ENCODE measurements at regions of chr2 and their contacts with region 1.

Region 1: GRCh38 chr2:168773719-168774521 is 28.5 kb upstream of the NOSTRIN start:
- DNase-seq: no peak
- H3K4me3 ChIP-seq: no peak overlapping the region
- H3K27ac ChIP-seq: no peak overlapping the region
- H3K4me1 ChIP-seq: peaks cover 0 to 4% (median 0%) of the 10 kb centered on the region in 4 donors
- H3K27me3 ChIP-seq: no peaks in the 10 kb centered on the region
- CTCF ChIP-seq: peak; percentile 44 to 60 (median 47)
- EP300 ChIP-seq: no peak
- POLR2A ChIP-seq: no peak

Region 2: DNA sequence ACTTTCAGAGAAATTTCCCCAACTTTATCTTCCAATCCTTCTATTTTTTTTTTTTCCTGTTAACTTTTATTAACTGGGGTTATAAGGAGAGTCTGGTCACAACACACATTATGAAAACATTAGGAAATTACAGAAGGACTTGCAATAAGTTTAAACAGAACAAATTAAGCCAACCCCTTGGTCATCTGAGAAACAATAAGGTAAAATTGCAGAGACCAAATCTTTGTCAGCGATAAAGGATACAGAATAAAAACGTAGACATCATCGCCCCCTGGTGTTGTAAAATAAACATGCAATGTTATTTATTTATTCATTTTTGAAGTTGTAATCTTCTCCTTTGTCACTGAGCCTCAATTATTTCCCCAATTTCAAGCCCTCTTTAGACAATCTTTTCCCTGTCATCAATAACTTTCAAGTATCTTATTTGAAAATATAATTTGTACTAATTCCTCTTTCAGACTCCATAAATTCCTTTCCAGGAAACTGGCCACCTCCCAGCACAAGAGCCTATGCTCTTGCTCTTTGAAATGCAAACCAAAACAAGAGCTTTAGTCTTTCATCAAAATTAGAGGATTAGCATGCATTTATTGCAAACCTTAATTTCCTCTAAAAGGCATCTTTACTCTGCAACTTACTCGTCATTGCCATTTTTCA is 146.7 kb after region 1 on chr2:
- intact Hi-C with region 1: loop called (anchors 10 kb)
- DNase-seq: no peak
- H3K4me3 ChIP-seq: no peak overlapping the region
- H3K27ac ChIP-seq: no peak overlapping the region
- H3K4me1 ChIP-seq: no peaks in the 10 kb centered on the region
- H3K27me3 ChIP-seq: no peaks in the 10 kb centered on the region
- CTCF ChIP-seq: peak; percentile 44 to 66 (median 60)
- EP300 ChIP-seq: no peak
- POLR2A ChIP-seq: no peak

Region 3: GRCh38 chr2:169203928-169204327 is 430.0 kb after region 1 on chr2:
- intact Hi-C with region 1: no loop called
- DNase-seq: no peak
- H3K4me3 ChIP-seq: no peak overlapping the region
- H3K27ac ChIP-seq: no peak overlapping the region
- H3K4me1 ChIP-seq: no peaks in the 10 kb centered on the region
- H3K27me3 ChIP-seq: no peaks in the 10 kb centered on the region
- CTCF ChIP-seq: no peak
- EP300 ChIP-seq: no peak
- POLR2A ChIP-seq: no peak

Measured in esophagus muscularis mucosa (tissue), 4 donors.